Activated CD4-positive, alpha-beta memory T cell treated with anti-CD3 and anti-CD28 coated beads for 36 hours (primary cell): ENCODE measurements at regions of chr21 and their contacts with region 1.

Region 1: DNA sequence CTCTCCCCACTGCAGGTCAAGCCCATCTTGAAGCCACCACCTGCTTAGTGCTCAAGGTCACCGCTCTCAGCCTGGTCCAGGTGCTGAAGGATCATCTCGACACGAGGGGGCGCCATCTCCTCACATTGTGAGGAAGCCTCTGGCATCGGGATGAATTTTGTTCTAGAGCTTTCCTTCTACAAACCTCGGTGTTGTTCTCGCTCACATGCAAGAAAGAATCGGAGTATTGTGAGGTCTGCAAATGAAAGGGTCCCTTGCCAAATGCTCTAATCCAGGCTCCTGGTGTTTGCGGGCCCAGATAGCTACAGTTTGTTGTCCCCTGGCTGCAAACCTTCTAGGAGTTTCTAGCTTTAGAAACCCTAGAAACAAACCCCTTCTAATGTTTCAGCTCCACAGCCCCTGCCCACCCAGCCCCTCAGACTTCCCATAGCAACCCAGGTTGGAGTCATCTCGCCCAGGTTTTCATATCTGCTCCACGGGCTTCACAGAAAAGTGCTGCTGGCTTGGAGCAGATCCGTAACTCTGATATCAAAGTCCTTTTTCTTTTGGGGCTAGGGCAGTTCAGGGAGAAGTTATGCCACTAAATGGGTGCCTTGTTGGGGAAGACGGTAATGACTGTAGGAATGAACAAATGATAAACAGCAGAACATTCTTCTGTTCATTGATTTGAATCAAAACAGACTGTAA is 8.6 kb upstream of the ATP5PO start:
- DNase-seq: peak; percentile 93
- H3K4me3 Mint-ChIP-seq: no peak overlapping the region
- H3K27ac Mint-ChIP-seq: peak overlapping the region; percentile 5
- H3K4me1 Mint-ChIP-seq: peaks cover 10% of the 10 kb centered on the region
- H3K27me3 Mint-ChIP-seq: no peaks in the 10 kb centered on the region

Region 2: DNA sequence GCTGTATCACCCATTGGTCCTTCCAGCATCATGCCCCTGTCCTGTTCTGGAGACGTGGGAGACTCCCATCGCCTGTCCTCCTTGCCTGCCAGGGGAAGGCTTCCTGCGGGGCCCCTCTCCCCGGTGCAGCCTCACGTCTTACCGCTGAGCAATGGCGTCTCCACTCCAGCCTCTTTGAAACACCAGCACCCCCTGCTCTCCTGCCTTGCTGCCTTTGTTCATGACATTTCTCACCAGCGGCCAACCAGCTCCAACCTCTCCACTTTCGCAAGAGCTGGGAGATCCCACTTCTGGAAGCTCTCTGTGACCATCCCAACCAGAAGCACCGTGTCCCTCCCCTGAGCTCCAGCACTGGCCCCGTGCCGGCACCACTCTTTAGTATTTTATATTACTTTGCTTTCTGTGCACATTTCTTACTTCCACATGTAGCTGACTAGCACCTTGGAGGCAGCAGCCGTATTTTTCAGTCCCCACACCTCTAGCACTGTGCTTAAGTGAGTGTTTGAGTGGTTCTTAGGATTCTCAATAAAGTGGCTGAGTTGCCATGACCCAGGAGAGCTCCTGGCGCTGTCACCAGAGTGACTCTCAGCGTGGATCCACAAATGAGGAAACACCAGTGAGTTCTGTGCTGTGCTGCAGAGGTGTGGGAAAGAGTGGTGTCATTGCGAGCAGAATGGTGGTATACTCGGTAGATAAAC is 92.1 kb before region 1 on chr21:
- CTCF ChIA-PET with region 1: no interaction called
- POLR2A ChIA-PET with region 1: no interaction called
- intact Hi-C with region 1: no loop called
- DNase-seq: no peak
- H3K4me3 Mint-ChIP-seq: no peak overlapping the region
- H3K27ac Mint-ChIP-seq: no peak overlapping the region
- H3K4me1 Mint-ChIP-seq: no peaks in the 10 kb centered on the region
- H3K27me3 Mint-ChIP-seq: no peaks in the 10 kb centered on the region

Region 3: DNA sequence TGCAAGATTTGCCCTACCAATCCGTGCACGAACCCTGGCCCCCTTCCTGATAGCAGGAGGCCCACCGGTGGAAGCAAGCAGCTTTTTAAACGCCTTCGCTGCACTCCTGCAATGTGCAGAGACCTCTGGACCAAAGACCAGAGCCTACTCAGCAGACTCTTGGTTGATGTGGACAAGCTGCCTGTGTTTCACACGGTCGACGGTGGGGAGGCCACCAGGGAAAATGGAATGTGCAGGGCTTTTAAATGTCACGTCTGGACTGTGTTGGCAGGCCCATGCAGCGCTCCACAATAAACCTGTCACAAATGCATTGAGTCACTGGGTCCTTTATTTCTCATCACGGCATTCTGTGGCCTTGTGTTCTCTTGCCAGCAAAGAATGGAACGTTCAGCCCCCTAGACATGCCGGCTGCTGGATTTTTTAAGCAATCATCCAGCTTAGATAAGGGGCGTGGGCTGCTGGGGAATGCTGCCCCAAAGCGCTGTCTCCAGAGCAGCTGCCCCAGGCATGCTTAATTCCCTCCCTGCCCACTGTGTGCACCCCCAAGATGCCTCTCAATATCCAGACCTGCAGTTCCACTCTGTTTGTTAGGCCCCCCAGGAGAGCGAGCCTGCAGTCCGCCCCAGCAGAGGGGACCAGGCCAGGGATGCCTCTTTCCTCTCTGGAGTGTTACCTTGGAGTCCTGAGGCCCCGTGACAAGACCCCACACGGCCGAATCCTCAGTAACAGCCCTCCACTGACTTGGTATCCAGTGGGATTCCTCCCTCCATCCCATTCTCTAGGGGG is 79.9 kb before region 1 on chr21:
- CTCF ChIA-PET with region 1: no interaction called
- POLR2A ChIA-PET with region 1: no interaction called
- intact Hi-C with region 1: no loop called
- DNase-seq: no peak
- H3K4me3 Mint-ChIP-seq: no peak overlapping the region
- H3K27ac Mint-ChIP-seq: no peak overlapping the region
- H3K4me1 Mint-ChIP-seq: no peaks in the 10 kb centered on the region
- H3K27me3 Mint-ChIP-seq: peaks cover 2% of the 10 kb centered on the region

Region 4: DNA sequence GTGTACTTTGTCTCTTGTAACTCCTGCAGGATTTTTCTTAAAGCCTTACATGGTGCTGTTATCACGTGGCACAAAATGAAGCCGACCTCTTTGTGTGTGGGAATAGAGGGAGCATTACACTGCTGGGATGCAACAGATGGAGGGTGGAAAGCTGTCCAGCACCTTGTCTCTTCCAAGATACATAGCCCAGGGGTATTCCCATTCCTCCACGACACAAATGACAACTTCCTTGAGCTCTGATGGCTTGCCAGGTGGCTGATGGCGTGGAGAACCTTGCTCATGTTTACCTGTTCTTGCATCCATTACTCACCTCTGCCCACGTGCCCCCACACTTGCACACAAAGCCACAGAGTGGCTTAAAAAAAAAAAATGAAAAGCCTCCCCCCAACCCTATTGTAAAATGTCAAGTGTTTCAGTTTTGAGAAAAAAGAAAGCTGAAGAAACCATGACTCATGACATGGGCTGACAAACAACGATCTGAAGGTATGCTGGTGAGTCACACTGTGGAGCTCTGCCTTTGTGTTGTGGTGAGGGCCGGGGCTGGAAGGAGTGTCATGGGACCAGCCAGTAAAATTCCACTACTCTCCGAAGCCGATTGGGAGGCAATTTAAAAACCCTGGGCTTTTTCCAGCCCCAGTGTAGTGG is 23.4 kb after region 1 on chr21:
- CTCF ChIA-PET with region 1: interaction called, 34 read pairs
- POLR2A ChIA-PET with region 1: interaction called, 19 read pairs
- intact Hi-C with region 1: no loop called
- DNase-seq: peak; percentile 92
- H3K4me3 Mint-ChIP-seq: peak overlapping the region; percentile 62
- H3K27ac Mint-ChIP-seq: peak overlapping the region; percentile 97
- H3K4me1 Mint-ChIP-seq: peaks cover 72% of the 10 kb centered on the region
- H3K27me3 Mint-ChIP-seq: peaks cover 4% of the 10 kb centered on the region

Region 5: DNA sequence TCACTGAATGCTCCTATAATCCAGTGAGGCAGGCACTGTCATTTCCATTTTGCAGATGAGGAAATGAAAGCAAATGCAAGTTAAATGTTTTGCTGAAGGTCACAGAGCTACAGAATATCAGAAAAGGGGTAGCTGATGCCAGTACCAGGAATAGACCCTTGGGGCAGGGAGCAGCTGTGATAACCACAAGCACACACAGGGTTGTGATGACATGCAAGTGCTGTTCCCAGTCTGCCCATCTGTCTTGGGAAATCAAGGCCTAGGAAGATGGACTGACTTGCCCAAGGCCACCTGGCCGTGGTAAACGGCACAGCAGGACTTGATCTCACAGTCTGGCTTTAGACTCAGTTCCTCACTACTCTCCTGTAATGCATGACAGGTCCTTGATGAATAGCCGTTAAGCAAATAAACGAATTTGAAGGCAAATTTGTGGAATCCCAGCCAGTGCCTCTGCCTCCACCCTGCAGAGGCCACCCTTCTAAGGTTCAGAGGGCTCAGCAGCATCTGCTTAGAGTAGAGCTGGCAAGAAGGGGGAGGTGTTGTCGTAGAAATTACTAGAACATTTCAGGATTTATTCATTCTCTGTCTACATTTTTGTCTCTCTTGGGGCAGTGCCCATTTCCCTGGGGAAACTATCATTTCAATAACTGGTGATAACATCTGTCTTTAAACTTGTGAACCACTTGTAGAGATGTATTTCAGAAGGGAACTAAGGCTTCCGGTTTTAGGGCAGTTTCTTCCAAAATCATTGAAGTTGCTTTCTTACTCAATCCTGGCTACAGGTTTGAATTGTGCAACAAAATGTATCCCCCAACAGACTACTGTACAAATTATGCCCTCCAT is 96.0 kb after region 1 on chr21:
- CTCF ChIA-PET with region 1: interaction called, 17 read pairs
- POLR2A ChIA-PET with region 1: no interaction called
- intact Hi-C with region 1: no loop called
- DNase-seq: no peak
- H3K4me3 Mint-ChIP-seq: no peak overlapping the region
- H3K27ac Mint-ChIP-seq: no peak overlapping the region
- H3K4me1 Mint-ChIP-seq: peaks cover 20% of the 10 kb centered on the region
- H3K27me3 Mint-ChIP-seq: no peaks in the 10 kb centered on the region

Region 6: GRCh38 chr21:34091607-34092006 is 167.4 kb after region 1 on chr21:
- CTCF ChIA-PET with region 1: interaction called, 38 read pairs
- POLR2A ChIA-PET with region 1: no interaction called
- intact Hi-C with region 1: no loop called
- DNase-seq: no peak
- H3K4me3 Mint-ChIP-seq: no peak overlapping the region
- H3K27ac Mint-ChIP-seq: no peak overlapping the region
- H3K4me1 Mint-ChIP-seq: peaks cover 46% of the 10 kb centered on the region
- H3K27me3 Mint-ChIP-seq: no peaks in the 10 kb centered on the region

Region 7: GRCh38 chr21:34129039-34129891 is 205.0 kb after region 1 on chr21:
- CTCF ChIA-PET with region 1: interaction called, 51 read pairs
- POLR2A ChIA-PET with region 1: no interaction called
- intact Hi-C with region 1: loop called (anchors 2 kb)
- DNase-seq: peak; percentile 84
- H3K4me3 Mint-ChIP-seq: peak overlapping the region; percentile 59
- H3K27ac Mint-ChIP-seq: peak overlapping the region; percentile 92
- H3K4me1 Mint-ChIP-seq: peaks cover 70% of the 10 kb centered on the region
- H3K27me3 Mint-ChIP-seq: no peaks in the 10 kb centered on the region

Region 8: GRCh38 chr21:34351786-34352241 is 427.6 kb after region 1 on chr21:
- CTCF ChIA-PET with region 1: interaction called, 277 read pairs
- POLR2A ChIA-PET with region 1: interaction called, 9 read pairs
- intact Hi-C with region 1: loop called (anchors 2 kb)
- DNase-seq: peak; percentile 49
- H3K4me3 Mint-ChIP-seq: no peak overlapping the region
- H3K27ac Mint-ChIP-seq: no peak overlapping the region
- H3K4me1 Mint-ChIP-seq: peaks cover 3% of the 10 kb centered on the region
- H3K27me3 Mint-ChIP-seq: peaks cover 9% of the 10 kb centered on the region

Region 9: DNA sequence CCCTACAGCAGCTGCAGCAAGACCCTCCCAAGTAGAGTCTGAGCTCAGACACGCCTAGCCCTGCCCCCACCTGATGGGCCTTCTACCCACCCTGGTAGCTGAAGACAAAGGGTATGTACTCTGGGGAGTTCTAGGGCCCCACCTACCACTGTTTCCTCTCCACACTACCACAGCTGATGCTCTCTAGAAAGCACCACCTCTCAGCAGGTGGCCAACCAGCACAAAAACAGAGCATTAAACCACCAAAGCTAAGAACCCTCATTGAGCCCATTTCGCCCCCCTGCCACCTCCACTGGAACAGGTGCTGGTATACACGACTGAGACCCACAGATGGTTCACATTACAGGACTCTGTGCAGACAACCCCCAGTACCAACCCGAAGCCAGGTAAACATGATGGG is 1877.2 kb after region 1 on chr21:
- CTCF ChIA-PET with region 1: no interaction called
- POLR2A ChIA-PET with region 1: no interaction called
- intact Hi-C with region 1: no loop called
- DNase-seq: no peak
- H3K4me3 Mint-ChIP-seq: no peak overlapping the region
- H3K27ac Mint-ChIP-seq: no peak overlapping the region
- H3K4me1 Mint-ChIP-seq: no peaks in the 10 kb centered on the region
- H3K27me3 Mint-ChIP-seq: peaks cover 17% of the 10 kb centered on the region